ENCODE measurements at regions of chr15 and their contacts with region 1.

Region 1: GRCh38 chr15:32651229-32651837 is 9.8 kb downstream of the SCG5 start:
- DNase-seq: peak; percentile 81
- CTCF ChIP-seq: peak; percentile 85

Region 2: DNA sequence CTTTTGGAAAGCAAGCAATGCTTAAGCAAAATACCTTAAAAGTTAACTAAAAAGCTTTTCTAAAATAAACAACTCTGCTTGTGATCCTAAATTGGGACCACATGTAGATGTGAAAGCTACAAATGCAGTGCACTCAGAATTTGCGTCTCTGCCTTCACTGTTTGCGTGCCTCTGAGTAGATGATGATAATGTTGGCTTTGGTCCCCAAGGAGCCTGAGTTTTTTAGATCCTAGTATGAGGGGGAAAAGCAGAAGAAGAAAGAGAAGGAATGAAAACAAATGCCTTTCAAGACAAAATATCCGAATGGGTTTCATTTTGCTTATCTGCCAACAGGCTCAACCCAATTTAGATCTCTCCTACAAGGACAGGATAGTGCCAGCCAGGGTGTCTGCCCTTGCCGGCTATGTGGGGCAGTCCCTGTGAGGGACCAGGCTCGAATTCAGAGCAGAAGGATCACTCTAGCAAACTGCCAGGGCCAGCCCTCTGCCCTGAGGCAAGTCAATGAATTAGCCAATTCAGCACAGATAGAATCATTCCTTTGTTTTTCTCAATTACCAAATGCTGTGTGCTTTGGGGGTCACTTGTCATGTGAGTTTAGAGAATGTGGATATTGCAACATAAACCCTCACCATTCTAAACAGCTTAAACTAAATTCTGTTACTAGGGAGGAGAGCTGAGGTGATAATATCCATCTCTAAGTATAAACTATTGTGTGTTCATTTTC is 18.7 kb after region 1 on chr15:
- CTCF ChIA-PET with region 1: interaction called, 10 read pairs
- POLR2A ChIA-PET with region 1: no interaction called
- DNase-seq: no peak
- CTCF ChIP-seq: no peak

Region 3: GRCh38 chr15:32763295-32763694 is 112.0 kb after region 1 on chr15:
- CTCF ChIA-PET with region 1: no interaction called
- POLR2A ChIA-PET with region 1: no interaction called
- DNase-seq: no peak
- CTCF ChIP-seq: no peak

Region 4: GRCh38 chr15:32781781-32782180 is 130.4 kb after region 1 on chr15:
- CTCF ChIA-PET with region 1: no interaction called
- POLR2A ChIA-PET with region 1: no interaction called
- DNase-seq: no peak
- CTCF ChIP-seq: no peak

Region 5: DNA sequence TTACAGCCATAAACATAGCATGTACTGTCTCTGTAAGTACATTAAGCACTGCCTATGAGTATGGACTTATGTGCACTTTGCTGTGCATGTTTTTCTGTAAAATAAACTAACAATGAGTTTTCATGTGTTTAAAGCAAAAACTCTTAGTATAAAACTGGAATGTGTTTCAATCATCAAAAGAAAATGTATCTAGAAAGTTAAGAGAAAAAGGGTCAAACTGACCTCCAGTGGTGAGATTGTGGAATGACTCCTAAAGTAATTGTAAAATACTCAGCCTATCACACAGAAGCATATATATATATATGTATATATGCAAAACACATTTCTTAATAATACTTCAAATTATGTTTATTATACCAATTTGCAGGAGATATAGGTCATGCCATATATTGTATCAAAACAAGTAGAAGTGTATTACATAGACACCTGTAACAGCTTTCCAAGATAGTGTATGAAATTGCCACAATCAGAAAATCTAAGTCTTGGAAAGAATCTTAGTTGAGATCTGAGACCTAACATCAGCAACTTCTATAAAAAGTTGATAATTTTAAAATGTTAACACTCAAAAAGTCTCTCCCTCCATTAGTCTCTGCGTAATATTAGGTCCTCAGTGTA is 343.6 kb after region 1 on chr15:
- CTCF ChIA-PET with region 1: interaction called, 95 read pairs
- POLR2A ChIA-PET with region 1: no interaction called
- DNase-seq: peak; percentile 12
- CTCF ChIP-seq: peak; percentile 33